ENCODE measurements at regions of chr5 and their contacts with region 1.

Region 1: GRCh38 chr5:124421584-124421983 is 324.9 kb downstream of the ZNF608 start:
- DNase-seq: no peak
- ATAC-seq: no peak

Region 2: GRCh38 chr5:124536333-124536732 is 114.7 kb after region 1 on chr5:
- intact Hi-C with region 1: loop called (anchors 5 kb)
- DNase-seq: no peak
- ATAC-seq: no peak

Measured in sciatic nerve (tissue), 2 donors.